Uterus (tissue), 4 donors: ENCODE measurements at regions of chr1 and their contacts with region 1.

Region 1: GRCh38 chr1:54499360-54500106 is 48.5 kb upstream of the ACOT11 start:
- DNase-seq: peak in 1 of 2 donors; percentile 41
- H3K4me3 ChIP-seq: peak overlapping the region; percentile 13 to 26
- H3K27ac ChIP-seq: no peak overlapping the region
- H3K4me1 ChIP-seq: no peaks in the 10 kb centered on the region
- H3K27me3 ChIP-seq: no peaks in the 10 kb centered on the region
- CTCF ChIP-seq: peak; percentile 33 to 65 (median 38)
- POLR2A ChIP-seq: no peak

Region 2: GRCh38 chr1:54070171-54070837 is 429.2 kb before region 1 on chr1:
- intact Hi-C with region 1: loop called (anchors 10 kb)
- DNase-seq: no peak
- H3K4me3 ChIP-seq: no peak overlapping the region
- H3K27ac ChIP-seq: no peak overlapping the region
- H3K4me1 ChIP-seq: no peaks in the 10 kb centered on the region
- H3K27me3 ChIP-seq: no peaks in the 10 kb centered on the region
- CTCF ChIP-seq: peak; percentile 68 to 86 (median 82)
- POLR2A ChIP-seq: no peak

Region 3: DNA sequence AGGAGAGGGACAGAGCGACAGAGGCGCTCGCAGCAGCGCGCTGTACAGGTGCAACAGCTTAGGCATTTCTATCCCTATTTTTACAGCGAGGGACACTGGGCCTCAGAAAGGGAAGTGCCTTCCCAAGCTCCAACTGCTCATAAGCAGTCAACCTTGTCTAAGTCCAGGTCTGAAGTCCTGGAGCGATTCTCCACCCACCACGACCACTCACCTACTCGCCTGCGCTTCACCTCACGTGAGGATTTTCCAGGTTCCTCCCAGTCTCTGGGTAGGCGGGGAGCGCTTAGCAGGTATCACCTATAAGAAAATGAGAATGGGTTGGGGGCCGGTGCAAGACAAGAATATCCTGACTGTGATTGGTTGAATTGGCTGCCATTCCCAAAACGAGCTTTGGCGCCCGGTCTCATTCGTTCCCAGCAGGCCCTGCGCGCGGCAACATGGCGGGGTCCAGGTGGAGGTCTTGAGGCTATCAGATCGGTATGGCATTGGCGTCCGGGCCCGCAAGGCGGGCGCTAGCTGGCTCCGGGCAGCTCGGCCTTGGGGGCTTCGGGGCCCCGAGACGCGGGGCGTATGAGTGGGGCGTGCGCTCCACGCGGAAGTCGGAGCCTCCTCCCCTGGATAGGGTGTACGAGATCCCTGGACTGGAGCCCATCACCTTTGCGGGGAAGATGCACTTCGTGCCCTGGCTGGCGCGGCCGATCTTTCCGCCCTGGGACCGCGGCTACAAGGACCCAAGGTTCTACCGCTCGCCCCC is 299.6 kb before region 1 on chr1 and contains the starts of genes CYB5RL and MRPL37:
- intact Hi-C with region 1: loop called (anchors 10 kb)
- DNase-seq: peak; percentile 90 to 95
- H3K4me3 ChIP-seq: peak within 1 kb of the TSS; percentile 86 to 89
- H3K27ac ChIP-seq: peak within 1 kb of the TSS; percentile 73 to 83
- H3K4me1 ChIP-seq: no peaks in the 10 kb centered on the region
- H3K27me3 ChIP-seq: no peaks in the 10 kb centered on the region
- CTCF ChIP-seq: no peak
- POLR2A ChIP-seq: peak in 1 of 2 donors; percentile 48
- total RNA-seq, gene CYB5RL: 1.3 to 11.6 (median 6.6) TPM
- total RNA-seq, gene MRPL37: 4.4 to 52.9 (median 39.0) TPM

Region 4: DNA sequence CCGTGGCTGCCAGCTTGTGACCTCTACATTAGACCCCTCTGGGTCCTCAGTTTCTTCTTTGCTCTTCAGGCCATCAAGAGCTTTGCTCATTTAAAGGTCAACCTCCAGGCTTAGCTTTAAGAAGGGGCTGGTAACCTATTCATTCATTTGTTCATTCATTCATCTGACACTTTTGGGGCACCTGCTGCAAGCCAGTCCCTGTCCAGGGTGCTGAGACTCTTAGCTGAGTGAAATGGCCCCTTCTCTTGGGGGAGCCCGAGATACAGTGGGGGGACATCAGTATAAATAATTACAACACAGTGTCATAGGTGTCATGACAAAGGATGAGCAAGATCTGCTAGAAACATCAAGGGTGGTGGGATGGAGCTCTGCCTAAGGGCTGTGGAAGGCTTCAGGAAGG is 205.6 kb after region 1 on chr1:
- intact Hi-C with region 1: no loop called
- DNase-seq: no peak
- H3K4me3 ChIP-seq: no peak overlapping the region
- H3K27ac ChIP-seq: no peak overlapping the region
- H3K4me1 ChIP-seq: no peaks in the 10 kb centered on the region
- H3K27me3 ChIP-seq: no peaks in the 10 kb centered on the region
- CTCF ChIP-seq: no peak
- POLR2A ChIP-seq: no peak